Heart left ventricle (tissue), 16 donors: ENCODE measurements at regions of chr4 and their contacts with region 1.

Region 1: GRCh38 chr4:101066624-101067170 is 280.6 kb downstream of the PPP3CA start:
- DNase-seq: no peak
- ATAC-seq: no peak
- H3K4me3 ChIP-seq: no peak overlapping the region
- H3K27ac ChIP-seq: no peak overlapping the region
- H3K4me1 ChIP-seq: peaks cover 0 to 29% (median 4%) of the 10 kb centered on the region in 12 donors
- H3K27me3 ChIP-seq: no peaks in the 10 kb centered on the region
- CTCF ChIP-seq: no peak
- POLR2A ChIP-seq: no peak

Region 2: GRCh38 chr4:101020956-101021355 is 45.7 kb before region 1 on chr4:
- intact Hi-C with region 1: no loop called
- DNase-seq: no peak
- ATAC-seq: peak in 3 of 4 donors; percentile 67 to 84 (median 81)
- H3K4me3 ChIP-seq: no peak overlapping the region
- H3K27ac ChIP-seq: peak overlapping the region in 1 of 12 donors; percentile 68
- H3K4me1 ChIP-seq: peaks cover 0 to 30% (median 0%) of the 10 kb centered on the region in 12 donors
- H3K27me3 ChIP-seq: no peaks in the 10 kb centered on the region
- CTCF ChIP-seq: no peak
- POLR2A ChIP-seq: no peak

Region 3: DNA sequence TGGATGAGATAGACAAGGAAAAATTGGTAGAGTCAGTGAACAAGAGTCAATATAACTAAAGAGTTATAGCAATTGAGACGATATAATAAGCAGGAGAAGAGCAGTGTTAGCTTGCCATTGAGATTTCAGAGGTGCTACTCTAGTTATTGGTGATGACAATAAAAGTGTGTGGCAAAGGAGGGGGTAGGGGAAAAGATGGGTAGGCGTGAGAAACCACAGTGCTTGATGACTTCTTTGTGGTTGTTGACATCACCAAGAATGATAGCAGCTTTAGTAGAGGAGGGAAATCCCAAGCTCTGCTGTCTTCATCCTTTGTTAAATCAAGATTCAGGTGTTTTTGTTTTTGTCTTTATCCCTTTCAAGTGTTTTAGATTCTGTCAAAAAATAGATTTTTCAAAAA is 460.5 kb after region 1 on chr4:
- intact Hi-C with region 1: no loop called
- DNase-seq: no peak
- ATAC-seq: no peak
- H3K4me3 ChIP-seq: no peak overlapping the region
- H3K27ac ChIP-seq: no peak overlapping the region
- H3K4me1 ChIP-seq: no peaks in the 10 kb centered on the region
- H3K27me3 ChIP-seq: no peaks in the 10 kb centered on the region
- CTCF ChIP-seq: no peak
- POLR2A ChIP-seq: no peak

Region 4: DNA sequence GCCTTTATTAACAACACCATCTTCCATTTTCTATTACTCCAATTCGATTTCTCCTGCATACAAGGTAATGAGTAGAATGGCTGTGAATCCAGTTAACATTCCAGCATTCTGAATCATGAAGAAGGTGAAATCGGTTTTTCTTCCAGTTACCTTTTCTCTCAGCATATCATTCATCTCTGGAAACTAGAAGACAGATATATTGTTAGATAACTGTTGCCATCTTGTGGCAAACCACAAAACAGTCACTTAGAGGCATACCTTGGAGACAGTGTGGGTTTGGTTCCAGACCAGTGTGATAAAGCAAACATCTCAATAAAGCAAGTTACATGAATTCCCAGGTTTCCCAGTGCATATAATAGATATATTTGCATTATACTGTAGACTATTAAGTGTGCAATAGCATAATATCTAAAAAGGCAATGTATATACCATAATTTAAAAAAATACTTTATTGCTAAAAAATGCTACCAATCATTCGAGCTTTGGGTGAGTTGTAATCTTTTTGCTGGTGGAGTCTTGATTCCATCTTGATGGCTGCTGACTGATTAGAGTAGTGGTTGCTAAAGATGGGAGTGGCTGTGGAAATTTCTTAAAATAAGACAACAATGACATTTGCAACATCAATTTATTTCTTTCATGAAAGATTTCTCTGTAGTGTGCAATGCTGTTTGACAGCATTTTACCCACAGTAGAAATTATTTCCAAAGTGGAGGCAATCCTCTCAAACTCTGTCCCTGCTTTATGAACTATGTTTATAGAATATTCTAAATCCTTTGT is 1196.5 kb after region 1 on chr4:
- intact Hi-C with region 1: loop called in 1 of 10 experiments (anchors 10 kb)
- DNase-seq: no peak
- ATAC-seq: no peak
- H3K4me3 ChIP-seq: no peak overlapping the region
- H3K27ac ChIP-seq: no peak overlapping the region
- H3K4me1 ChIP-seq: no peaks in the 10 kb centered on the region
- H3K27me3 ChIP-seq: no peaks in the 10 kb centered on the region
- CTCF ChIP-seq: peak in 10 of 12 donors; percentile 18 to 54 (median 32)
- POLR2A ChIP-seq: no peak